Activated CD4-positive, alpha-beta memory T cell treated with anti-CD3 and anti-CD28 coated beads for 36 hours (primary cell): ENCODE measurements at regions of chr14 and their contacts with region 1.

Region 1: GRCh38 chr14:102020058-102020971 is 55.9 kb downstream of the DYNC1H1 start:
- DNase-seq: peak; percentile 80
- H3K4me3 Mint-ChIP-seq: no peak overlapping the region
- H3K27ac Mint-ChIP-seq: peak overlapping the region; percentile 85
- H3K4me1 Mint-ChIP-seq: peaks cover 23% of the 10 kb centered on the region
- H3K27me3 Mint-ChIP-seq: no peaks in the 10 kb centered on the region

Region 2: GRCh38 chr14:102081231-102082080 is 61.1 kb after region 1 on chr14:
- CTCF ChIA-PET with region 1: no interaction called
- POLR2A ChIA-PET with region 1: interaction called, 3 read pairs
- intact Hi-C with region 1: loop called (anchors 2 kb)
- DNase-seq: no peak
- H3K4me3 Mint-ChIP-seq: peak overlapping the region; percentile 77
- H3K27ac Mint-ChIP-seq: peak overlapping the region; percentile 68
- H3K4me1 Mint-ChIP-seq: peaks cover 51% of the 10 kb centered on the region
- H3K27me3 Mint-ChIP-seq: no peaks in the 10 kb centered on the region